Left cardiac atrium (tissue), 4 donors: ENCODE measurements at regions of chr5 and their contacts with region 1.

Region 1: GRCh38 chr5:140174465-140175366 is at the start of gene CYSTM1:
- DNase-seq: peak; percentile 97
- ATAC-seq: peak; percentile 93 to 96
- total RNA-seq, gene CYSTM1: 61.7 to 74.6 TPM

Region 2: GRCh38 chr5:140244525-140245025 is 69.9 kb after region 1 on chr5:
- intact Hi-C with region 1: loop called in 1 of 2 experiments (anchors 10 kb)
- DNase-seq: peak; percentile 94
- ATAC-seq: peak; percentile 46

Region 3: GRCh38 chr5:140346348-140347101 is 171.8 kb after region 1 on chr5 and contains the start of gene HBEGF:
- intact Hi-C with region 1: loop called (anchors 5 to 10 kb)
- DNase-seq: peak; percentile 86
- ATAC-seq: peak; percentile 89
- total RNA-seq, gene HBEGF: 12.9 to 18.3 TPM

Region 4: GRCh38 chr5:140357726-140358093 is 183.0 kb after region 1 on chr5:
- intact Hi-C with region 1: loop called in 1 of 2 experiments (anchors 10 kb)
- DNase-seq: peak; percentile 85
- ATAC-seq: peak; percentile 94